Naive thymus-derived CD4-positive, alpha-beta T cell (primary cell): ENCODE measurements at regions of chr14 and their contacts with region 1.

Region 1: DNA sequence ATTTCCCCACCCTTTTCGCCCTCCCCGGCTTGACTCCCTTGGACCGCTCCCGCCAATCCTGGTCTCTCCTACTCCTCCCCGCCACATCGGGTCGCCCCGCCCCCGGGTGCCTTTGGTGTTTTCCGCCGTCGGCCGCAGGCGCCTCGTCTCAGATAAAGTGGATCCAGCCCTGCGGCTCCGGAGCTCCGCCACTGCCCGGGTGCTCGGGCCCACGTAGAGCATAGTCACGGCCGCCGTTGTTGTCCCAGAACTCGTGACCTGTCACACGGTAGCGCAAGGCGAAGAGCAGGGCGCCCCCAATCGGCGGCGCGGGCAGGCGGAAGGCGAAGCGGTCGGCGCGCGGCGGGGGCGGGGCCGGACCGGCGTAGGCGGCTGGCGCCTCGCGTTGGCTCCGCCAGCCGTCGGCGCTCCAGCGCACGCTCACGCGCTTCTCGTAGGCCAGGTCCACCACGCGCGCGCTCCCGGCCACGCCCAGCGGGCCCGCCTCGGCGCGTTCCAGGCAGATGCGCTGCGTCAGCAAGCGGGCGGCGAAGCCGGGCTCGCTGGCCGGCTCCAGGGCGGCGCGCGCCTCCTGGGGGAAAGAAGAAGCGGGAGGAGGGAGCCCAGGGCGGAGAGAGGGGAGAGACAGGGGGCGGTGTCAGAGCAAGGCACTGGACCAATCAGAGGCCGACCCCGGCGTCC is 1.2 kb downstream of the PPP1R3E start:
- DNase-seq: peak; percentile 93 to 99 (median 98)
- ATAC-seq: peak; percentile 86
- H3K4me3 ChIP-seq: peak overlapping the region; percentile 98
- H3K4me3 Mint-ChIP-seq: peak overlapping the region; percentile 89 to 100 (median 98)
- H3K27ac ChIP-seq: peak overlapping the region; percentile 95
- H3K27ac Mint-ChIP-seq: peak overlapping the region; percentile 92 to 99 (median 97)
- H3K4me1 ChIP-seq: peaks cover 0 to 15% of the 10 kb centered on the region in 2 donors
- H3K4me1 Mint-ChIP-seq: peaks cover 7 to 41% (median 26%) of the 10 kb centered on the region in 7 donors
- H3K27me3 ChIP-seq: no peaks in the 10 kb centered on the region
- H3K27me3 Mint-ChIP-seq: peaks cover 8 to 15% (median 12%) of the 10 kb centered on the region in 5 donors

Region 2: DNA sequence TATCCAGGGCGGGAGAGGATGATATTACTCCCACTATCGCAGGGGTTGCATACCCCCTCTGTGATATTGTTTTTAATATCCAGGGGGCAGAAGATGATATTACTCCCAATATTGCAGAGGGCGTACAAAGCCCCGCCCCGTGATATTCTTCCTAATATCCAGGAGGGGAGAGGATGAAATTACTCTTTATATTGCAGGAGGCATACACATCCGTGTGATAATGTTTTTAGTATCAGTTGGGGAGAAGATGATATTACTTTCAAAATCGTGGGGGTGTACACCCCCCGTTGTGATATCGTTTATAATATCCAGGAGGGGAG is 587.8 kb before region 1 on chr14:
- CTCF ChIA-PET with region 1: no interaction called
- POLR2A ChIA-PET with region 1: no interaction called
- intact Hi-C with region 1: loop called in 1 of 2 experiments (anchors 5 kb)
- DNase-seq: no peak
- ATAC-seq: no peak
- H3K4me3 ChIP-seq: peak overlapping the region; percentile 34
- H3K4me3 Mint-ChIP-seq: peak overlapping the region; percentile 79 to 92 (median 88)
- H3K27ac ChIP-seq: no peak overlapping the region
- H3K27ac Mint-ChIP-seq: peak overlapping the region in 4 of 9 donors; percentile 32 to 76 (median 64)
- H3K4me1 ChIP-seq: peaks cover 4 to 6% of the 10 kb centered on the region in 2 donors
- H3K4me1 Mint-ChIP-seq: peaks cover 3 to 17% (median 11%) of the 10 kb centered on the region in 7 donors
- H3K27me3 ChIP-seq: no peaks in the 10 kb centered on the region
- H3K27me3 Mint-ChIP-seq: peaks cover 27 to 44% (median 34%) of the 10 kb centered on the region in 5 donors

Region 3: DNA sequence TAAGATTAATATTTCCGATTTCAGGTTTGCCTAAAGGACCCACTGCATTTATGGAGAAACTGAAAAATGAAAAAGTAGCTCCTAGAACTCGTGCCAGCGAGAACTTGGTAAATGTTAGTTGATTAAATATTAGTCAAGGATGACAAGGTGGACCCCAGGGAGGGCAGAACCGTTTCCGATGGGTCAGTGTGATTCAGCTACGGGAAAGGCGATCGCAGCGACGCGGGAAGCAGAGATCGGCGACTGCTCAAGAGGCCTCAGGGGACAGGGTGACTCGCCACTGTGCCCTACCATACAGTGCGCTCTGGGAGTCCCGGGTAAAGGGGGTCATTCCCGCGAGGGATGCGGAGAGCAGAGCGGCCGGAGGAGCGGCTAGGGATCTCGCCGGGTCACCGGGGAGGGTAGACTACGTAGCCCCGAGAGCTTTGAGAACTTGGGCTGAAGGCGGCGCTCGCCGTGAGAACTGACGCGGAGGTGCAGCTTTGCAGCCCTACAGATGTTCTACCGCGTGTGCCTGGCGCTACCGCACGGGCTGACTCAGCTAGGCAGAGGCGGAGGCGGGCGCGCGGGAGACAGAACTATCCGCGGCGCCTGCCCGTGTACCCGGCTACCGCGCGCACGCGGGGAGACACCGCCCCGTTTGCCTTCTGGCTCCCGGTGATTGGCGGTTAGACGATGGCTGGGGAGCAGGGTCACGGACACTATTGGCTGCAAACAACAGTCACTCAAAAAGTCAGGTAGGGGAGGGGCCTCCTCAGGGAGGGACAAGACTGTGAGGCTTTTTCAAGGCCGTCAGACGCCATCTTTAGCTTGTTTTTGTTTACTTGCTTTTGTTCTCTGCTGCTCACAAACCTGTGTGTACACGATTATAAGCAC is 294.6 kb before region 1 on chr14:
- CTCF ChIA-PET with region 1: no interaction called
- POLR2A ChIA-PET with region 1: interaction called, 3 read pairs
- intact Hi-C with region 1: loop called in 1 of 2 experiments (anchors 1 kb)
- DNase-seq: peak; percentile 88 to 99 (median 98)
- ATAC-seq: peak; percentile 97
- H3K4me3 ChIP-seq: peak overlapping the region; percentile 94
- H3K4me3 Mint-ChIP-seq: peak overlapping the region; percentile 91 to 100 (median 96)
- H3K27ac ChIP-seq: peak overlapping the region; percentile 86
- H3K27ac Mint-ChIP-seq: peak overlapping the region; percentile 87 to 99 (median 98)
- H3K4me1 ChIP-seq: peaks cover 9 to 25% of the 10 kb centered on the region in 2 donors
- H3K4me1 Mint-ChIP-seq: peaks cover 12 to 60% (median 48%) of the 10 kb centered on the region in 7 donors
- H3K27me3 ChIP-seq: no peaks in the 10 kb centered on the region
- H3K27me3 Mint-ChIP-seq: no peaks in the 10 kb centered on the region

Region 4: GRCh38 chr14:23120541-23121251 is 180.7 kb before region 1 on chr14:
- CTCF ChIA-PET with region 1: interaction called, 9 read pairs
- POLR2A ChIA-PET with region 1: interaction called, 11 read pairs
- intact Hi-C with region 1: loop called (anchors 1 kb)
- DNase-seq: peak; percentile 58 to 77 (median 74)
- ATAC-seq: peak; percentile 92
- H3K4me3 ChIP-seq: peak overlapping the region; percentile 53
- H3K4me3 Mint-ChIP-seq: peak overlapping the region; percentile 63 to 87 (median 72)
- H3K27ac ChIP-seq: peak overlapping the region; percentile 71
- H3K27ac Mint-ChIP-seq: peak overlapping the region; percentile 90 to 99 (median 96)
- H3K4me1 ChIP-seq: peaks cover 21 to 41% of the 10 kb centered on the region in 2 donors
- H3K4me1 Mint-ChIP-seq: peaks cover 26 to 65% (median 48%) of the 10 kb centered on the region in 7 donors
- H3K27me3 ChIP-seq: no peaks in the 10 kb centered on the region
- H3K27me3 Mint-ChIP-seq: peaks cover 0 to 5% (median 0%) of the 10 kb centered on the region in 5 donors

Region 5: GRCh38 chr14:23352511-23353432 is 51.3 kb after region 1 on chr14 and contains the start of gene SLC22A17:
- CTCF ChIA-PET with region 1: no interaction called
- POLR2A ChIA-PET with region 1: interaction called, 10 read pairs
- intact Hi-C with region 1: loop called in 1 of 2 experiments (anchors 1 kb)
- DNase-seq: peak; percentile 42 to 80 (median 67)
- ATAC-seq: peak; percentile 93
- H3K4me3 ChIP-seq: peak within 1 kb of the TSS; percentile 54
- H3K4me3 Mint-ChIP-seq: peak within 1 kb of the TSS; percentile 78 to 92 (median 88)
- H3K27ac ChIP-seq: peak within 1 kb of the TSS; percentile 58
- H3K27ac Mint-ChIP-seq: peak within 1 kb of the TSS in 8 of 9 donors; percentile 5 to 93 (median 77)
- H3K4me1 ChIP-seq: no peaks in the 10 kb centered on the region
- H3K4me1 Mint-ChIP-seq: peaks cover 10 to 25% (median 18%) of the 10 kb centered on the region in 7 donors
- H3K27me3 ChIP-seq: no peaks in the 10 kb centered on the region
- H3K27me3 Mint-ChIP-seq: peaks cover 0 to 55% (median 33%) of the 10 kb centered on the region in 5 donors
- total RNA-seq, gene SLC22A17: 1.9 to 30.0 (median 22.6) TPM

Region 6: GRCh38 chr14:24141097-24141880 is 839.9 kb after region 1 on chr14 and contains the start of gene EMC9:
- CTCF ChIA-PET with region 1: no interaction called
- POLR2A ChIA-PET with region 1: interaction called, 3 read pairs
- intact Hi-C with region 1: loop called (anchors 10 kb)
- DNase-seq: peak; percentile 90 to 100 (median 99)
- ATAC-seq: peak; percentile 94
- H3K4me3 ChIP-seq: peak within 1 kb of the TSS; percentile 87
- H3K4me3 Mint-ChIP-seq: peak within 1 kb of the TSS; percentile 85 to 100 (median 94)
- H3K27ac ChIP-seq: peak within 1 kb of the TSS; percentile 83
- H3K27ac Mint-ChIP-seq: peak within 1 kb of the TSS; percentile 83 to 96 (median 93)
- H3K4me1 ChIP-seq: peaks cover 33 to 43% of the 10 kb centered on the region in 2 donors
- H3K4me1 Mint-ChIP-seq: peaks cover 47 to 87% (median 77%) of the 10 kb centered on the region in 7 donors
- H3K27me3 ChIP-seq: no peaks in the 10 kb centered on the region
- H3K27me3 Mint-ChIP-seq: no peaks in the 10 kb centered on the region
- total RNA-seq, gene EMC9: 9.0 to 25.5 (median 22.3) TPM

Region 7: GRCh38 chr14:24353559-24354481 is 1052.4 kb after region 1 on chr14:
- CTCF ChIA-PET with region 1: no interaction called
- POLR2A ChIA-PET with region 1: no interaction called
- intact Hi-C with region 1: no loop called
- DNase-seq: no peak
- ATAC-seq: no peak
- H3K4me3 ChIP-seq: no peak overlapping the region
- H3K4me3 Mint-ChIP-seq: no peak overlapping the region
- H3K27ac ChIP-seq: no peak overlapping the region
- H3K27ac Mint-ChIP-seq: no peak overlapping the region
- H3K4me1 ChIP-seq: no peaks in the 10 kb centered on the region
- H3K4me1 Mint-ChIP-seq: no peaks in the 10 kb centered on the region
- H3K27me3 ChIP-seq: peaks cover 0 to 7% of the 10 kb centered on the region in 2 donors
- H3K27me3 Mint-ChIP-seq: peaks cover 34 to 58% (median 49%) of the 10 kb centered on the region in 5 donors